K562 (cell line): ENCODE measurements at regions of chr2 and their contacts with region 1.

Region 1: GRCh38 chr2:46876741-46877384 is 38.7 kb downstream of the MCFD2 start:
- DNase-seq: peak; percentile 54 to 79 (median 60)
- ATAC-seq: peak; percentile 80
- H3K4me3 ChIP-seq: no peak overlapping the region
- H3K27ac ChIP-seq: no peak overlapping the region
- H3K4me1 ChIP-seq: peaks cover 11 to 33% of the 10 kb centered on the region in 2 experiments
- H3K27me3 ChIP-seq: peaks cover 0 to 27% of the 10 kb centered on the region in 2 experiments; a peak in 4 of 5 replicates
- CTCF ChIP-seq: peak; percentile 64 to 95 (median 81)
- EP300 ChIP-seq: 0 out of 2 replicates have a peak, but pooled peaks have one; percentile 21
- POLR2A ChIP-seq: no peak
- RAD21 ChIP-seq: peak; percentile 83 to 89

Region 2: GRCh38 chr2:45046786-45047185 is 1830.1 kb before region 1 on chr2:
- CTCF ChIA-PET with region 1: no interaction called
- POLR2A ChIA-PET with region 1: no interaction called
- in situ Hi-C with region 1: no loop called
- intact Hi-C with region 1: no loop called
- DNase-seq: no peak
- ATAC-seq: no peak
- H3K4me3 ChIP-seq: no peak overlapping the region
- H3K27ac ChIP-seq: no peak overlapping the region
- H3K4me1 ChIP-seq: no peaks in the 10 kb centered on the region
- H3K27me3 ChIP-seq: peaks cover 4 to 25% of the 10 kb centered on the region in 2 experiments; a peak in 4 of 5 replicates
- CTCF ChIP-seq: no peak
- EP300 ChIP-seq: no peak
- POLR2A ChIP-seq: no peak
- RAD21 ChIP-seq: no peak

Region 3: GRCh38 chr2:46803911-46804670 is 72.8 kb before region 1 on chr2:
- CTCF ChIA-PET with region 1: interaction called, 12 read pairs
- POLR2A ChIA-PET with region 1: interaction called, 4 read pairs
- in situ Hi-C with region 1: no loop called
- intact Hi-C with region 1: loop called (anchors 1 kb)
- DNase-seq: no peak
- ATAC-seq: no peak
- H3K4me3 ChIP-seq: no peak overlapping the region
- H3K27ac ChIP-seq: no peak overlapping the region
- H3K4me1 ChIP-seq: 0 out of 5 replicates have a peak, but pooled peaks cover 0 to 4% of the 10 kb centered on the region in 2 experiments
- H3K27me3 ChIP-seq: peaks cover 16 to 42% of the 10 kb centered on the region in 2 experiments; a peak in 4 of 5 replicates
- CTCF ChIP-seq: no peak
- EP300 ChIP-seq: no peak
- POLR2A ChIP-seq: no peak
- RAD21 ChIP-seq: no peak

Region 4: DNA sequence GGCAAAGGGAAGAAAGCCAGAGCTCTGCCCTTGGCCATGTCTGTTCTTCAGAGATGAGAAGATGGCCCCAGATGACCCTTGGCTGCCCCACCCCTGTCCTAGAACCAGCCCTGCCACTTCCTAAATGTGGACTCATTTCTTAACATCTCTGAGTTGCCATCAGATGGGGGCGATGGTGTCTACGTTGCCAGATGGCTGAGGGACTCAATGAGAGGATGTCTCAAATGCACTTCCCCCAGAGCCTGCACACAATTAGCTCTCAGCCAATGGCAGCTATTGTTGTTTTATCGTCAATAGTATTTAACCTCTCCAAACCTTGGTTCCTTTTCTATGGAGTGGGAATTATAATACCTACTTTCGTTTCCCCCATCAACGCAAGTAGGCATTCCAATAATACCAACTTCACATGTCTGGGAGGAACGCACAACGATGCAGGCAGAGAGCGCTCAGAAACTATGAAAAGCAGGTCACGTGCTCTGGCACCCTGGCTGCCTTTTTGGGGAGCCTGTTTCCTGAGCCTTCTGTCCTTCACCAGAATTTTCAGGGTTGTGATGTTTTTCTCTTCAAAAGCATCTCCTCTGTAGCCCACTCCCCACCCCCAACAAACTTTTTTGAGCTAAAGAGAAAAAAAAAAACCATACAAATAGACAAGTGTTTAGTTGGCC is 61.6 kb before region 1 on chr2:
- CTCF ChIA-PET with region 1: no interaction called
- POLR2A ChIA-PET with region 1: interaction called, 3 read pairs
- in situ Hi-C with region 1: no loop called
- intact Hi-C with region 1: loop called (anchors 1 kb)
- DNase-seq: peak in 2 of 4 experiments; percentile 27 to 40
- ATAC-seq: no peak; the same call in 2 of the 3 replicates
- H3K4me3 ChIP-seq: no peak overlapping the region
- H3K27ac ChIP-seq: no peak overlapping the region
- H3K4me1 ChIP-seq: peaks cover 6 to 7% of the 10 kb centered on the region in 2 experiments; a peak in 3 of 5 replicates
- H3K27me3 ChIP-seq: peaks cover 16 to 47% of the 10 kb centered on the region in 2 experiments; a peak in 4 of 5 replicates
- CTCF ChIP-seq: peak in 2 of 3 experiments; percentile 12 to 45; a peak in 3 of 6 replicates
- EP300 ChIP-seq: no peak
- POLR2A ChIP-seq: no peak
- RAD21 ChIP-seq: peak in 1 of 2 experiments; percentile 40; a peak in 2 of 4 replicates

Region 5: GRCh38 chr2:46849703-46850556 is 26.9 kb before region 1 on chr2:
- CTCF ChIA-PET with region 1: no interaction called
- POLR2A ChIA-PET with region 1: no interaction called
- in situ Hi-C with region 1: no loop called
- intact Hi-C with region 1: loop called (anchors 1 kb)
- DNase-seq: peak; percentile 80 to 92 (median 86)
- ATAC-seq: peak; percentile 92
- H3K4me3 ChIP-seq: no peak overlapping the region
- H3K27ac ChIP-seq: peak overlapping the region; percentile 61
- H3K4me1 ChIP-seq: peaks cover 40 to 47% of the 10 kb centered on the region in 2 experiments
- H3K27me3 ChIP-seq: no peaks in the 10 kb centered on the region
- CTCF ChIP-seq: no peak
- EP300 ChIP-seq: peak; percentile 38; the same call in 1 of the 2 replicates
- POLR2A ChIP-seq: no peak
- RAD21 ChIP-seq: no peak